ENCODE measurements at regions of chr2 and their contacts with region 1.

Region 1: GRCh38 chr2:46045888-46046287 is 251.3 kb upstream of the EPAS1 start:
- DNase-seq: peak; percentile 39
- H3K4me3 Mint-ChIP-seq: no peak overlapping the region
- H3K27ac Mint-ChIP-seq: no peak overlapping the region
- H3K4me1 Mint-ChIP-seq: peaks cover 6% of the 10 kb centered on the region
- H3K27me3 Mint-ChIP-seq: no peaks in the 10 kb centered on the region

Region 2: GRCh38 chr2:45675263-45675812 is 370.6 kb before region 1 on chr2:
- CTCF ChIA-PET with region 1: no interaction called
- intact Hi-C with region 1: no loop called
- DNase-seq: no peak
- H3K4me3 Mint-ChIP-seq: no peak overlapping the region
- H3K27ac Mint-ChIP-seq: no peak overlapping the region
- H3K4me1 Mint-ChIP-seq: no peaks in the 10 kb centered on the region
- H3K27me3 Mint-ChIP-seq: no peaks in the 10 kb centered on the region

Region 3: GRCh38 chr2:46032996-46033395 is 12.9 kb before region 1 on chr2:
- CTCF ChIA-PET with region 1: interaction called, 3 read pairs
- intact Hi-C with region 1: loop called (anchors 1 kb)
- DNase-seq: peak; percentile 69
- H3K4me3 Mint-ChIP-seq: no peak overlapping the region
- H3K27ac Mint-ChIP-seq: peak overlapping the region; percentile 33
- H3K4me1 Mint-ChIP-seq: peaks cover 10% of the 10 kb centered on the region
- H3K27me3 Mint-ChIP-seq: no peaks in the 10 kb centered on the region

Region 4: GRCh38 chr2:46296840-46297545 is 251.1 kb after region 1 on chr2 and contains the start of gene EPAS1:
- CTCF ChIA-PET with region 1: no interaction called
- intact Hi-C with region 1: no loop called
- DNase-seq: peak; percentile 84
- H3K4me3 Mint-ChIP-seq: peak within 1 kb of the TSS; percentile 80
- H3K27ac Mint-ChIP-seq: no peak within 1 kb of the TSS
- H3K4me1 Mint-ChIP-seq: peaks cover 15% of the 10 kb centered on the region
- H3K27me3 Mint-ChIP-seq: peaks cover 47% of the 10 kb centered on the region
- total RNA-seq, gene EPAS1: 2.1 to 2.9 TPM